ENCODE measurements at regions of chr3 and their contacts with region 1.

Region 1: DNA sequence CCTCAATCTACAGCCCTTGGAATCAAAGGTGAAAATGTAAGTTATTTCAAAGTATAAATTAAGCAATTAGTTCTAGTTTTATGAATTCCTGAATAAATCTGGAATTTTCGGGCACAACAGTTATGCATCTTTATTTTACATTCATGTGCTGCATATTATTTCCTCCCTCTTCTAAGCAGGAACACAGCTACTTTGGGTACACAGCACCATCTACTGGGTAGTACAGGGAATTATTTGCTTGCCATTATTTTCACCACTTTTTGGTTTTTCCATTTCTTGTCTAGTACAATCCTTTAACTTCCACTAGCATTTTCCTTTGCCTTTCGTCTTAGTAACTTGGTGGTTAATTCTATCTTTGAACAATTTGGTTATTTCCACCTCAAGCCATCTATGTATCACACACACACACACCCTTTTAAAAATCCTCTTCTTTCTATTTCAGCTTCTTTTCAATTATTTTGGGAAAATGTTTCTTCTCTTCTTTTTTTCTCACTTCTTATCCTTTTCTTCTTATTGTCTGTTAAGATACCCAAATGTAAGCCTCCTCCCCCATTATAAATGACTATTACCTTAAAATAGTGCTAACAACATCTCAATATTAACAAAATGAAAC is 451.0 kb downstream of the MFSD1 start:
- H3K4me3 ChIP-seq: no peak overlapping the region
- H3K27ac ChIP-seq: no peak overlapping the region
- H3K4me1 ChIP-seq: no peaks in the 10 kb centered on the region
- CTCF ChIP-seq: peak; percentile 48

Region 2: GRCh38 chr3:158820521-158820920 is 432.4 kb before region 1 on chr3:
- CTCF ChIA-PET with region 1: interaction called, 11 read pairs
- POLR2A ChIA-PET with region 1: no interaction called
- H3K4me3 ChIP-seq: no peak overlapping the region
- H3K27ac ChIP-seq: no peak overlapping the region
- H3K4me1 ChIP-seq: no peaks in the 10 kb centered on the region
- CTCF ChIP-seq: no peak

Region 3: GRCh38 chr3:158918008-158918407 is 334.9 kb before region 1 on chr3:
- CTCF ChIA-PET with region 1: interaction called, 21 read pairs
- POLR2A ChIA-PET with region 1: no interaction called
- H3K4me3 ChIP-seq: no peak overlapping the region
- H3K27ac ChIP-seq: no peak overlapping the region
- H3K4me1 ChIP-seq: no peaks in the 10 kb centered on the region
- CTCF ChIP-seq: no peak

Measured in HEK293 (cell line).